Activated CD4-positive, alpha-beta T cell treated with anti-CD3 and anti-CD28 coated beads for 36 hours (primary cell): ENCODE measurements at regions of chr9 and their contacts with region 1.

Region 1: DNA sequence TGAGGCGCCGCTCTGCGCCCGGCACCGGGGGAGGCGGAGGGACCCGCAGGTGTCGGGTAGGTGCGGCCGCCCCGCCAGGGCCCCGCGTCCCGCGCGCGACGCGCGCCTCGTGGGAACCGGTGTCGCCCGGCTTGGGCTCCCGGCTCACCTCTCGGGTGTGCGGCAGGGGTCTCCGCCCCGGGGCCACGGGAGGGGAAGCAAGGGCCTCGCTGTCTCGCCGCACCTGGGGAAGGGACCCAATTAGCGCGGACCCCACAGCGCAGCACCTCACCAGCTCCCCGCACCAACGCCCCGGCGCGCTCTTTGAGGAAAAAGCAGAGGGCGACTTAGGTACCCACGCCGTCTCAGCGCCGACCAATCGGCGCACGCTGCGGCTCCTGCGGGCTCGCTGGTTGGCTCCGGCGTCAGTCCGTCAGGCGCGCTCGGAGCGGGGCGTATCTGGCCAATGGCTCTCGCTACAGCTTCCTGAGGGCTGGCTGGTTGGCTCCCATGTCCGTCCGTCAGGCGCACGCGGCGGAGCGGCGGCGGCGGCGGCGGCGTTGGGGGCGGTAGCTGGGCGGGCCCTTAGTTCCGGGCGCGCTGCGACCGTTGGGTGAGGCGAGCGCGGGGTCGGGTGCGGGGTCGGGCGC is at the start of gene TRAF2:
- DNase-seq: peak; percentile 98
- ATAC-seq: peak; percentile 89
- H3K4me3 Mint-ChIP-seq: peak within 1 kb of the TSS; percentile 85
- H3K27ac Mint-ChIP-seq: peak within 1 kb of the TSS; percentile 95
- H3K4me1 Mint-ChIP-seq: peaks cover 51% of the 10 kb centered on the region
- H3K27me3 Mint-ChIP-seq: no peaks in the 10 kb centered on the region
- total RNA-seq, gene TRAF2: 37.4 to 46.2 TPM

Region 2: DNA sequence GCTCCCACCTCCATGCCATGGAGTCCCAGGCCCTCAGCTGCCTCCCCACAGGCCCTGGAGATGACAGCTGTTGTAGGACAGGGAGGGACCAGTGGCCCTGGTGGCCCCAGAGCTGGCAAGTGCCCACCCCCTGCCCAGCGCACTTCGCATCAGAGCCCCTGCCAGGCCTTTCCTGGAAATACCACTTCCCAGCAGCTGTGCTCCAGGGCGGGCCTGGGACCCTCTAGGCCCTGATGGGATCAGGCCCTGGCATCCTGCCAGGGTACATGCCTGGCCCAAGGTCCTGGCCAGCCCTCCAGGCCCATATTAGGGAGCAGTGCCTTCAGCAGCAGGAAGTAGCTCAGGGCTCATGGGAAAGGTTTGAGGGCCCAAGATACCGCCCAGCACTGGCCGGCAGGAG is 1181.6 kb before region 1 on chr9:
- CTCF ChIA-PET with region 1: no interaction called
- POLR2A ChIA-PET with region 1: no interaction called
- intact Hi-C with region 1: no loop called
- DNase-seq: no peak
- ATAC-seq: no peak
- H3K4me3 Mint-ChIP-seq: no peak overlapping the region
- H3K27ac Mint-ChIP-seq: no peak overlapping the region
- H3K4me1 Mint-ChIP-seq: no peaks in the 10 kb centered on the region
- H3K27me3 Mint-ChIP-seq: peaks cover 3% of the 10 kb centered on the region

Region 3: DNA sequence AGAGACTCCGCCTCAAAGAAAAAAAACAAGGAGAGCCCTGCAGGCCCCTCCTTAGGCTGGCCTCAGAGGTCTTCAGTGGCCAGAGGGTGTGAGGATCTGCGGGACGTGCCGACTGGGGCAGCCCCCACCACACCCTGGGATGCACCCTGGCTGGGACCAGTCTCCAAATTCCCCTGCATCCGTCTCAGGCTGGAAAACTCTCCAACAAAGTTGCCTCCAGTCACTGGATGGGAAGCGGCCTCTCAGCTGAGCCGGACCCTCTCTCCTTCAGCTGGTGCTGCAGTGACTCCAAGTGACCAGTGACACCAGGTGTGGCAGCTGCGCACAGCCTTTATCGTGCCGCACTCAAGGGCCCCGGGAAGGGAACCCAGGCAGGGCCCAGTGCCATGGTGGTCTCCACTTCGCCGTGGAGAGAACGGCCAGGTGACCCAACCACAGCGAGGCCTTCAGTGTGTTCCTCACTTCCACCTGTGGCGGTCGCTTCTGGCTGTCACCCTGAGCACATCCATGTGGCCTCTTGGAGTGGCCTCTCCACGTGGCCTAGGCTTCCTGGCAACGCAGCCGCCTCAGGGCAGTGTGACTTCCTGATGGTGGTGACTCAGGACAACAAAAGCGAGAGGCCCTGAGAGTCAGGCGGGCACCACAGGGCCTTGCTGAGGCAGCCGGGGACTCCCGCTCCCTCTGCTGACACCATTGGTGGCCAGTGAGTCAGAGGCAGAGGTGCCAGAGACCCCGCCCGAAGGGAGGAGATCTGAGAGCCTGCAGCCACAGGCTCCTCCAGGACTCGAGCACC is 959.5 kb before region 1 on chr9:
- CTCF ChIA-PET with region 1: no interaction called
- POLR2A ChIA-PET with region 1: no interaction called
- intact Hi-C with region 1: loop called in 1 of 2 experiments (anchors 10 kb)
- DNase-seq: peak; percentile 95
- ATAC-seq: peak; percentile 91
- H3K4me3 Mint-ChIP-seq: peak overlapping the region; percentile 19
- H3K27ac Mint-ChIP-seq: peak overlapping the region; percentile 94
- H3K4me1 Mint-ChIP-seq: peaks cover 39% of the 10 kb centered on the region
- H3K27me3 Mint-ChIP-seq: no peaks in the 10 kb centered on the region

Region 4: DNA sequence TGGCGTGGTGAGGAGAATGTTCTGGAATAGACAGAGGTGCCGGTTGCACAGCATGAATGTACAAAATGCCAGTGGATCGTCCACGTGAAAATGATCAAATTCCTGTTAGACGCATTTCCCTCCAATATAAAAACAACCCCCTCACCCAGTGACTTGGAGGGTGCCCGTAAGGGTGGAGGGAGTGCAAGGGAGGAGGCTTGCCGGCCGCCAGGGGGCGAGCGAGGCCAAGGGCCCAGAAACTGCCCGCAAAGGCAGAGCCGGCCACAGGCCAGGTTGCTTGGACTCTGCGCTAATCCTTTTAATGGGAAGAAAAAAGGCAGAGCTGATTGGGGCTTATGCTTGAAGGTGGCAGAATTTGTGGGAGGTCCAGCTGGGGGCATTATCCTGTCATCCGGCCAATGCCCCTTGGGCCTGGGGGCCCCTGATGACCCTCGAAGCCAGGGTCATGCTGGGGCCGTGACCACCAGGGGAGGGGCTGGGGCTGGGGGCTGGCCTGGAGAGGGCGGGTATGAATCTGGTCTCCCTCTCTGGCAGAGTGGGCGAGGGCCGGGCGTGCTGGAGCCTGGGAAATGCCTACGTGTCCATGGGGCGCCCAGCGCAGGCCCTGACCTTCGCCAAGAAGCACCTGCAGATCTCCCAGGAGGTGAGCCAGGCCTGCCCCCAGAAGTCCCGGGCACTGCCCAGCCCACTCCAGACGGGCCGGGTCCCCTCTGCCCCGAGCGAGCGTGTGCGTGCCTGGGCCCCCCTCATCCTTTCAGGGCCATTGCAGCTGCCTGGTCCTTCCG is 546.7 kb before region 1 on chr9:
- CTCF ChIA-PET with region 1: no interaction called
- POLR2A ChIA-PET with region 1: no interaction called
- intact Hi-C with region 1: no loop called
- DNase-seq: peak; percentile 59
- ATAC-seq: no peak
- H3K4me3 Mint-ChIP-seq: no peak overlapping the region
- H3K27ac Mint-ChIP-seq: no peak overlapping the region
- H3K4me1 Mint-ChIP-seq: no peaks in the 10 kb centered on the region
- H3K27me3 Mint-ChIP-seq: no peaks in the 10 kb centered on the region

Region 5: GRCh38 chr9:136728080-136728547 is 157.9 kb before region 1 on chr9:
- CTCF ChIA-PET with region 1: no interaction called
- POLR2A ChIA-PET with region 1: no interaction called
- intact Hi-C with region 1: loop called in 1 of 2 experiments (anchors 1 kb)
- DNase-seq: peak; percentile 95
- ATAC-seq: peak; percentile 72
- H3K4me3 Mint-ChIP-seq: peak overlapping the region; percentile 100
- H3K27ac Mint-ChIP-seq: no peak overlapping the region
- H3K4me1 Mint-ChIP-seq: peaks cover 39% of the 10 kb centered on the region
- H3K27me3 Mint-ChIP-seq: no peaks in the 10 kb centered on the region

Region 6: DNA sequence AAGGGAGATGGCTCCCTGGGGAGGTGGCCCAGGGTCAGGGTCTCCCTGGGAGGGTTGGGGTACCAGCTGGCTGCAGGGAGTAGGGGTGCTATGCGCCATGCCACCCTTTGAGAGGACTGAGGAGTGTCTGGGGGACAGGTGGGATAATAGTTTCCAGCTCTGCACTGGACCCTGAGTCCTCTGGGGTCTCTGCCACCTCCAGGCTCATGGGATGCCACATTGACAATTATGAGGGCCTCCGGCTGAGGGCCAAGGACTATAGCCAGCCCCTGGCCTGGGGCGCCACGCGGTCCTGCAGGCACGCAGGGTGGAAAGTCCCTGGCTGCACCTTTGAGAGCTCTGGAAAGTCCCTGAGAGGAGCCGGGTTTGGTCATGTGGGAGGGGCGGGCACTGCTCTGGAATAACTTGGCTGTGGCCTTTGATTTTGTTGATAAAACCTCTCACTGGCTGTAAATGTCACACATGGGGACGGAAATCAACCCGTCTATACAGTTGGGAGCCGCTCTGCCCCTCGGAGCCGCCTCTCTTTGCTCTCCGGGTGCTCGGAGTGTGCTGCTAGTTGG is 16.3 kb after region 1 on chr9:
- CTCF ChIA-PET with region 1: interaction called, 5 read pairs
- POLR2A ChIA-PET with region 1: interaction called, 8 read pairs
- intact Hi-C with region 1: loop called (anchors 1 kb)
- DNase-seq: peak; percentile 93
- ATAC-seq: peak; percentile 85
- H3K4me3 Mint-ChIP-seq: peak overlapping the region; percentile 62
- H3K27ac Mint-ChIP-seq: peak overlapping the region; percentile 98
- H3K4me1 Mint-ChIP-seq: peaks cover 41% of the 10 kb centered on the region
- H3K27me3 Mint-ChIP-seq: no peaks in the 10 kb centered on the region

Region 7: GRCh38 chr9:136991993-136992818 is 106.1 kb after region 1 on chr9 and contains the start of gene PAXX:
- CTCF ChIA-PET with region 1: no interaction called
- POLR2A ChIA-PET with region 1: no interaction called
- intact Hi-C with region 1: loop called in 1 of 2 experiments (anchors 1 kb)
- DNase-seq: peak; percentile 98
- ATAC-seq: peak; percentile 95
- H3K4me3 Mint-ChIP-seq: peak within 1 kb of the TSS; percentile 81
- H3K27ac Mint-ChIP-seq: peak within 1 kb of the TSS; percentile 70
- H3K4me1 Mint-ChIP-seq: peaks cover 22% of the 10 kb centered on the region
- H3K27me3 Mint-ChIP-seq: peaks cover 4% of the 10 kb centered on the region
- total RNA-seq, gene PAXX: 52.7 to 67.1 TPM

Region 8: GRCh38 chr9:137006116-137007003 is 120.3 kb after region 1 on chr9:
- CTCF ChIA-PET with region 1: no interaction called
- POLR2A ChIA-PET with region 1: no interaction called
- intact Hi-C with region 1: no loop called
- DNase-seq: no peak
- ATAC-seq: no peak
- H3K4me3 Mint-ChIP-seq: no peak overlapping the region
- H3K27ac Mint-ChIP-seq: no peak overlapping the region
- H3K4me1 Mint-ChIP-seq: no peaks in the 10 kb centered on the region
- H3K27me3 Mint-ChIP-seq: no peaks in the 10 kb centered on the region

Region 9: GRCh38 chr9:137200311-137201204 is 314.5 kb after region 1 on chr9 and contains the start of gene TPRN:
- CTCF ChIA-PET with region 1: no interaction called
- POLR2A ChIA-PET with region 1: no interaction called
- intact Hi-C with region 1: loop called in 1 of 2 experiments (anchors 5 kb)
- DNase-seq: peak; percentile 99
- ATAC-seq: peak; percentile 99
- H3K4me3 Mint-ChIP-seq: peak within 1 kb of the TSS; percentile 79
- H3K27ac Mint-ChIP-seq: peak within 1 kb of the TSS; percentile 76
- H3K4me1 Mint-ChIP-seq: peaks cover 29% of the 10 kb centered on the region
- H3K27me3 Mint-ChIP-seq: no peaks in the 10 kb centered on the region
- total RNA-seq, gene TPRN: 5.6 to 5.8 TPM